Activated CD8-positive, alpha-beta memory T cell treated with anti-CD3 and anti-CD28 coated beads, Interleukin-2, amount 10 ng/mL, durations not matched to agents 7 days and 5 days (primary cell): ENCODE measurements at regions of chr14 and their contacts with region 1.

Region 1: GRCh38 chr14:55129428-55130195 is 560 bp downstream of the LGALS3 start:
- DNase-seq: peak; percentile 77
- ATAC-seq: peak; percentile 70
- H3K4me3 Mint-ChIP-seq: peak overlapping the region; percentile 80
- H3K27ac Mint-ChIP-seq: peak overlapping the region; percentile 72
- H3K4me1 Mint-ChIP-seq: peaks cover 66% of the 10 kb centered on the region
- H3K27me3 Mint-ChIP-seq: peaks cover 5% of the 10 kb centered on the region

Region 2: DNA sequence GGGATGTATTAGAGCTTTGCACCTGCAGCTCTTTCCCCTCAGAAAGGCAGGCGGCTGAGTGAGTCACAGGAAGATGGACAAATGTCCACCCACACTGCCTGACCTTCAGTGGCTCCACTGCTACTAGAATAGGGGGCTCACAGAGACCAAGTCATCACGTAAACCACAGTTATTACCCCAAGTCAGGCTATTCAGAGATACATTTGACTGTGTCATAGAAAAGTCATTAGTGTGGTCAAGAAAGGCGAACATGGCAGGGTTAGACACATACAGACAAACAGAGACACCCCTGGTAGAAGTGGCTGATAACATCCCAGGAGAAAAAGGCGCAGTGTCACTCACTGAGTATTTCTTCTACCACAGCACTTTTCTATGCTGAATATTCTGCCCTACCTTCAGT is 263.0 kb before region 1 on chr14:
- CTCF ChIA-PET with region 1: no interaction called
- DNase-seq: no peak
- ATAC-seq: no peak
- H3K4me3 Mint-ChIP-seq: no peak overlapping the region
- H3K27ac Mint-ChIP-seq: no peak overlapping the region
- H3K4me1 Mint-ChIP-seq: peaks cover 17% of the 10 kb centered on the region
- H3K27me3 Mint-ChIP-seq: no peaks in the 10 kb centered on the region

Region 3: DNA sequence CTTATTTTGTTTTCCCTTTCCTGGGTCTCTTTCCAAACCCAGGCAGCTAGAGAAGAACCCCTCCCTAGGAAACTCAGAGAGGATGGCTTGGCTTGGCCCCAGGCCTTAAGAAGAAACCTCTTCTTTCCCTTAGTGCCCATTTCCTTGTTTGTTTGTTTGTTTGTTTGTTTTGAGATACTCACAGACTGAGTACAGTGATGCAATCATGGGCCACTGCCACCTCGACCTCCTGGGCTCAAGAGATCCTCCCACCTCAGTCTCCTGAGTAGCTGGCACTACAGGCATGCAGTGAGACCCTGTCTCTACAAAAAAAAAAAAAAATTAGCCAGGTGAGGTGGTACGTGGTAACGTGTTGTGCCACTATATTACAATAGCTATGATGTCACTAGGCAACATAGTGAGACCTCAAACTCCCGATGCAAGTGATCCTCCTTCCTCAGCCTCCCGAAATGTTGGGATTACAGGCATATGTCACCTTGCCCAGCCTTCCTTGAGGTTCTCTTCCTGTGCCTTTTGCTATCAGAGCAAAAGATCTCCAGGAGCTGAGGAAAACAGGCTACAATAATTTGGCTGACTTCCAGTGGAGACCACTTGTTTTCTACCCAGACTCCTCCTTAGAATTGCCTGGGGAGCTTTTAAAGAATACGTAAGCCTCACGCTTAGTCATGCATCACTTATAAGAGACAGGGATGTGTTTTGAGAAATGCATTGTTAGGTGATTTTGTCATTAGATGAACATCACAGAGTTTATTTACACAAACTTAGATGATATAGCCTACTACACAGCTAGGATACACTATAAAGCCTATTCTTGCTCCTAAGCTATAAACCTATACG is 35.1 kb before region 1 on chr14:
- CTCF ChIA-PET with region 1: interaction called, 33 read pairs
- DNase-seq: no peak
- ATAC-seq: no peak
- H3K4me3 Mint-ChIP-seq: no peak overlapping the region
- H3K27ac Mint-ChIP-seq: no peak overlapping the region
- H3K4me1 Mint-ChIP-seq: peaks cover 62% of the 10 kb centered on the region
- H3K27me3 Mint-ChIP-seq: no peaks in the 10 kb centered on the region

Region 4: GRCh38 chr14:55102141-55102621 is 27.4 kb before region 1 on chr14:
- CTCF ChIA-PET with region 1: interaction called, 34 read pairs
- DNase-seq: peak; percentile 88
- ATAC-seq: peak; percentile 63
- H3K4me3 Mint-ChIP-seq: peak overlapping the region; percentile 67
- H3K27ac Mint-ChIP-seq: peak overlapping the region; percentile 100
- H3K4me1 Mint-ChIP-seq: peaks cover 75% of the 10 kb centered on the region
- H3K27me3 Mint-ChIP-seq: no peaks in the 10 kb centered on the region

Region 5: GRCh38 chr14:55180434-55180833 is 50.8 kb after region 1 on chr14:
- CTCF ChIA-PET with region 1: no interaction called
- DNase-seq: no peak
- ATAC-seq: no peak
- H3K4me3 Mint-ChIP-seq: no peak overlapping the region
- H3K27ac Mint-ChIP-seq: peak overlapping the region; percentile 65
- H3K4me1 Mint-ChIP-seq: peaks cover 23% of the 10 kb centered on the region
- H3K27me3 Mint-ChIP-seq: no peaks in the 10 kb centered on the region

Region 6: DNA sequence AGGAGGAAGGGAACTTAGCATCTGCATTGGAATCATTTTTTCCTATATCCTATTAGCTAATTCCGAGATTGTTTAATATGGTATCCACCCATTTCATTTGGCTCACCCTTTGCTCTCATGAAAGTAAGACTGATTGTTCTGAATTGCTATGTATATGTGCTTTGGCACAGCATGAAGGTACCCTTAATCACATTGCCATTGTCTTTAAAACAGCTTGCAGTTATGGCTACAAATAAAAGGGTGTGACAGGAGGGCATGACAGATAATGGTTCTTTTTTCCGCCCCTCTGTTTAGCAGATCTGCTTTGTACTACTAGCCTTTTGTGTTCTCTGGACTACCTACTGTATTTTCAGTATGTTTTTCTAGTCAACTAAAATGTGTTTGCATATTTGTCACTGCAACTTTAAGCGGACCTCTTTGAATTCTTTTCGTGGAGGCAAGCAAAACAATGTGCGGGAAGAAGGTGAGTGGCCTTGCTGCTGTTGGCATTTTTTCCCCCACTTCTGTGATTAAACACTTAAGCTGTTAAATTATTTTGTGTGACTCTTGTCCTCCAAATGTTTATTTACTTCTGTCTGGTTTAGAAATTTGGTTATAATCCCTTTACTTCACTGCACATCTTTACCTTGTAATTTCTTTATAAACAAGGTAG is 177.5 kb after region 1 on chr14:
- CTCF ChIA-PET with region 1: no interaction called
- DNase-seq: no peak
- ATAC-seq: no peak
- H3K4me3 Mint-ChIP-seq: no peak overlapping the region
- H3K27ac Mint-ChIP-seq: no peak overlapping the region
- H3K4me1 Mint-ChIP-seq: peaks cover 17% of the 10 kb centered on the region
- H3K27me3 Mint-ChIP-seq: no peaks in the 10 kb centered on the region